ENCODE measurements at regions of chr3 and their contacts with region 1.

Region 1: GRCh38 chr3:52934630-52935530 is 37.5 kb upstream of the STIMATE start:
- DNase-seq: peak in 1 of 2 donors; percentile 58
- H3K4me3 ChIP-seq: no peak overlapping the region
- H3K27ac ChIP-seq: no peak overlapping the region
- H3K4me1 ChIP-seq: no peaks in the 10 kb centered on the region
- H3K27me3 ChIP-seq: no peaks in the 10 kb centered on the region
- CTCF ChIP-seq: peak; percentile 82 to 83

Region 2: DNA sequence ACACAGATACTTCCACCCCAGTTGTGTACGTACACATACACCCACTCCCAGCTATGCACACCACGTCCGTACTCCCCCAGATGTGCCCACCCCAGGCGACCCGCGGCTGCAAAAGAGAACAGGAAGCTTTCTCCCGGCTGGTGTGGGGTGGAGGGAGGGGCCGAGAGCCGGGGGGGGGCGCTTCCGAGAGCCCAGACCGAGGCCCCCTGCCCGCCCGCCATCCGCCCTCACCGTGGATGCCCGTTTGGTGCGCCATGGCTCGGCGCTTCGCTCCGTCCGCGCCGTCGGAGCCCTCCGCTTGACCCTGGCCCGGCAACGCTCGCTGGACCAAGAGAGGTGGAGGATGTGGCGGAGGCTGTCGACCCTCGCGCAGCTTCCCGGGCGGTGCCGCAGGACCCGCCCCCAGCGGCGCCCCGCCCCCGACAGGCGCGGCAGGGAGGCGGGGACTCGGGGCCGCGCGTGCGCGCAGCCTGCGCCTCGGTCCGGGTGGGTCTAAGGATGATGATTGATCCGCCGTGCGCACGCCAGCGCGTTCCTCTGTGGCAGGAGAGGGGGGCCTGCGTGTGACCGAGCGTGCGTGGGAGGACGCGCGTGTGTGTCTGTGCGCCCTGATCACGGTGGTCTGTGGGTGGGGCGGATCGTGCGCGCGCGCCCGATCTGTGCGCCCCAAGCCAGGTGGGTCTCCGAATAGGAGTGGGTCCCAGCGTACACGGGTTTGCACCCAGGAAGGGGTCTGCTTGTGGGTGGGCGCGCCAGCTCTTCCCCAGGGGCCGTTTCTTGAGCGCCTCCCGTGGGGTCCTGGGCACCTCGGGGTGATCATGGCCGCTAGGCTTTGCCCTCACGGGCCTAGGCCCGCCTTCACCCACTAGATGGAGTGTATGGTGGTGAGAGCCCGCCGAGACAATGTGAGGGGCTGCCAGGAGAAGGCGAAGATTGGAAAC is 695.8 kb before region 1 on chr3 and contains the start of gene TWF2:
- intact Hi-C with region 1: no loop called
- DNase-seq: peak; percentile 68 to 87
- H3K4me3 ChIP-seq: peak within 1 kb of the TSS; percentile 82 to 94
- H3K27ac ChIP-seq: peak within 1 kb of the TSS; percentile 80 to 94
- H3K4me1 ChIP-seq: peaks cover 0 to 52% (median 37%) of the 10 kb centered on the region in 4 donors
- H3K27me3 ChIP-seq: no peaks in the 10 kb centered on the region
- CTCF ChIP-seq: peak; percentile 30 to 45

Region 3: DNA sequence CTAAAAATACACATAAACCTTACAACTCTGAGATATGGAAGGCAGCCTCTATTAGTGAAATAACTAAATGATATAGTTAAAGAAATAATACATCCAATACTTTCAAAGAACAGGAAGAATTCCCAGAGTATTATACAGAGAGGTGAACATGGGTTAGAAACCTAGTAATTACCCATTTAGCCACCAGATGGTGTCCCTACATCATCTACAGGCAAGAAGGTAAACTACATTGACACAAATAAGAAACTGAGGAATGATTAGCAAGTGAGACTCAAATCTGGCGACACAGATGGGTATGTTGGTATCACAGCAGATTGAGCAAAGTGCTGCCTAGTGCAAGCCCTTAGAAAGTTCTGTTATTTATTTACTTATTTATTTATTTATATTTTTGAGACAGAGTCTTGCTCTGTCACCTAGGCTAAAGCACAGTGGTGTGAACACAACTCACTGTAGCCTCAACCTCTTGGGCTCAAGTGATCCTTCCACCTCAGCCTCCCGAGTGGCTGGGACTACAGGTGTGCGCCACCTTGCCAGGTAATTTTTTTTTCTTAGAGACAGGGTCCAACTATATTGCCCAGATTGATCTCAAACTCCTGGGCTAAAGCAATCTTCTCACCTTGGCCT is 192.3 kb before region 1 on chr3:
- intact Hi-C with region 1: loop called (anchors 5 kb)
- DNase-seq: no peak
- H3K4me3 ChIP-seq: no peak overlapping the region
- H3K27ac ChIP-seq: no peak overlapping the region
- H3K4me1 ChIP-seq: no peaks in the 10 kb centered on the region
- H3K27me3 ChIP-seq: no peaks in the 10 kb centered on the region
- CTCF ChIP-seq: peak; percentile 59 to 63

Region 4: DNA sequence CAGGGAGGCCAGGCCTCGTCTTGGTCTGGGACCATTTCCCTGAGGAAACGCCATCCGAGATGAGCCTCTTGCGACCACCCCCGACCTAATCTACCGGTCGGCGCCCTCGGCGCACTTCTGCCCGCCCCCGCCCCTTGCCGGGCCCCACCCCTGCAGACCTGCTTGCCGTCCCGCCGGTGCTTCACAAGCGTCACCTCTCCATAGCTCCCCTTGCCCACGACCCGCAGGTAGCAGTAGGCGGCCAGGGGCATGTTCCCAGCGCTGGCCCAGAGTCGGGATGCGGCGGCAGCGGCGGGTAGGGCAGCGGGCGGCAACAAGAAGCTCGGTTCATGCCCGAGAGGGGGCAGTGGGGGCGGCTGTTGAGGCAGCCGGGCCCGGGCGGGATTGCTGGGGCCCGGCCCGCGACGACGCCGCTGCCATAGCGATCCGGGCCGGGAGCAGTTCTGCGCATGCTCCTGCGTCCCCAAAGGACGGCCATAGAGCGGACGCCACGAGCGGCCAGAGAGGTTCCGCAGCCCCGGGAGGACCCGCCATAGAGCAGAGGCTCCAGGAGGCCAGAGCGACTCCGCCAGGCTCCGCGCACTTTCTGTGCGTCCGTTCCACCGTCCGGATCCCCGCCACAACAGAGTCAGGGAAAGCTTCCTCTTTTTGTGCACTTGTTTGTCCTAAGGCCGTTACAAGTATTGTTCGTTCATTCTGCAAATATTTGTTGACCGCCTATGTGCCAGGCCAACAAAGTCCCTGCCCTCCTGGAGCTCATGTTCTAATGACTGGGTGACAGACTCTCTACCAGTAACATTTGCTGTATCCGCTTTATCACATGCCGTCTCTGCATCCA is 164.2 kb before region 1 on chr3 and contains the start of gene NEK4:
- intact Hi-C with region 1: loop called (anchors 10 kb)
- DNase-seq: peak; percentile 90 to 95
- H3K4me3 ChIP-seq: peak within 1 kb of the TSS; percentile 83 to 99
- H3K27ac ChIP-seq: peak within 1 kb of the TSS; percentile 73 to 82
- H3K4me1 ChIP-seq: peaks cover 0 to 15% (median 11%) of the 10 kb centered on the region in 4 donors
- H3K27me3 ChIP-seq: no peaks in the 10 kb centered on the region
- CTCF ChIP-seq: peak; percentile 13 to 19

Region 5: DNA sequence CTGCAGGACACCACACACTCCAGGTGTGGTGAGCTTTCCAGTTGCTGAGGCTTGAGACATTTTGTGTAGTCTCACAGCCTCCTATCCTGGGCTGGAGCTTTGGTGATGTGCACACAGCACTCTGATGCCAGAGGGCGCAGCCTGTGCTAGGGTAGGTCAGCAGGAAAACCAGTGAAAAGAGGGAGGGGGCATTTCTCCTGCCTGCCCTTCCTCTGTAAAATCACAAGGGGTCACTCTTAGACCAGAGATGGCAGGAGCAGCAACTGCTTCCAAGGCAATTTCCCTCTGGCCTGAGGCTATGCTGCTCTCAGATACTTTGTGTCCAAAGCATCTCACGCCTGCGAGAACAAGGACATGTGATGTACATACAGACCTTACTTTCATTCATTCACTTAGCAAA is 83.5 kb before region 1 on chr3:
- intact Hi-C with region 1: loop called (anchors 5 kb)
- DNase-seq: peak in 1 of 2 donors; percentile 19
- H3K4me3 ChIP-seq: no peak overlapping the region
- H3K27ac ChIP-seq: no peak overlapping the region
- H3K4me1 ChIP-seq: peaks cover 0 to 22% (median 6%) of the 10 kb centered on the region in 4 donors
- H3K27me3 ChIP-seq: no peaks in the 10 kb centered on the region
- CTCF ChIP-seq: peak; percentile 47 to 64

Region 6: GRCh38 chr3:52873433-52874159 is 61.3 kb before region 1 on chr3:
- intact Hi-C with region 1: no loop called
- DNase-seq: no peak
- H3K4me3 ChIP-seq: no peak overlapping the region
- H3K27ac ChIP-seq: no peak overlapping the region
- H3K4me1 ChIP-seq: peaks cover 0 to 26% (median 4%) of the 10 kb centered on the region in 4 donors
- H3K27me3 ChIP-seq: no peaks in the 10 kb centered on the region
- CTCF ChIP-seq: no peak

Region 7: DNA sequence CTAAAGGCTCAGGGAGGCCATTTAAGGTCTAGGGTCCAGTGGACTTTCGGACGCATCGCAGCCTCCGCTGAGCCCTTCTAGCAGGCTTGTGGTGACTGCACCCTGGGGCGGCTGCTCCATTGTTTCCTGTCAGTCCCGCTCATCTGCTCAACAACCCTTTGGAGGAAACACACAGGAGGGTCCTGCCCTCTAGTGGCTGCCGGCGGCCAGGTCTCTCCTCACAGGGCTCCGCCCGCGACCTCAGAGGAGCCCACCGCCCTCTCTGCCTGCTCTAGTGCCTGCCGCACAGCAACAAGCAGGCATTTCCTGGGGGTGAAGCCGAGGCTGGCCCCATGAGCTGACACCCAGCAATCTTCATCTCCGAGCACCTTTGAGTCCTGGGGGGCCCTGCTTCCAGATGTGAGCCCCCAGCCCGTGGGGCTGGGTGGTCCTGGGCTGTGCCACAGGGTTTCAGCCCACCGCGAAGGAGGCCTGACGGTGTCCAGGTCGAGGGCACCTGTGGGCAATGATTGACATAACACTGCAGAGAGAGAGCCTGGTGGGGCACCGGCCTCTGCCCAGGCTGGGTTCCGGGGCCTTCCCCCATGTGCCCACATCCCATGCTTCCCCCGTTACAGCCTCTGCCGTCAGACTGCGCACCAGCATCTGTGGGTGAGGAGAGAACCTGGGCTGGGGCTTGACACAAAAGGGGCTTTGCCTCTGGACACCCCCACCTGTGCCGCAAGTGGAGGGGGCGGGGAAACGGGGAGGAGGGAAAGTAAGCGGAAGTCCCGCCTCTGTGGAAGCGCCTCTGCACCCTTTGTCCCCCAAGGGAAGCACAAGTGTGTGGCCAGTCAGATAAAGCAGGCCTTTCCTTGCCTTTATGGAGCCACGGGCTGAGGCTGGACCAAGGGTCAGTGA is 138.0 kb after region 1 on chr3:
- intact Hi-C with region 1: loop called (anchors 5 kb)
- DNase-seq: peak; percentile 81 to 88
- H3K4me3 ChIP-seq: peak overlapping the region; percentile 70 to 83
- H3K27ac ChIP-seq: peak overlapping the region; percentile 77 to 86
- H3K4me1 ChIP-seq: peaks cover 0 to 23% (median 13%) of the 10 kb centered on the region in 4 donors
- H3K27me3 ChIP-seq: no peaks in the 10 kb centered on the region
- CTCF ChIP-seq: peak; percentile 89 to 96